WTC11 (cell line): ENCODE measurements at regions of chr11 and their contacts with region 1.

Region 1: DNA sequence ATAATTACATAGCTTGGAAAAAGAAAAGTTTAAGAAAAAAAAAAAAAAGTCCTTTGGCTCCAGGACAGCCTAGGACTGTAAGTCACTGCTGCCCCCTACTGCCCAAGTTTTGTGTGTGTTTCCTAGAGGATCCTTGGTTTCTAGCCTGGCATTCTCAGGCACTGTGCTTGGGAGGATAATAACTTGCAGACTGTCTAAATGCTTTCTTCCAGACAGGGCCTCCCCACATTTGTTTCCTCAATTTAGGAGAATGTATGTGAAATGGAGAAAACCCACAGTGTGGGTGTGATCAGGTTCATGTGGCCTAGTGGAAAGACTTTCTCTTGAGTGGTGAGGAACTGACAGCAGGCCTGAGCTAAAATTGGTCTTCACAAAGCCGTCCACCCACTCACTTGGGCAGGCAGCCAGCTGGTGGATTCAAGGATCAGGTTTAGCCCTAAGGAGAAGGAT is 191.0 kb downstream of the NAV2 start:
- DNase-seq: peak; percentile 85
- ATAC-seq: peak; percentile 83
- H3K4me3 Mint-ChIP-seq: no peak overlapping the region
- H3K27ac Mint-ChIP-seq: no peak overlapping the region
- H3K4me1 Mint-ChIP-seq: peaks cover 26% of the 10 kb centered on the region
- H3K27me3 Mint-ChIP-seq: no peaks in the 10 kb centered on the region
- CTCF ChIP-seq: peak; percentile 75

Region 2: DNA sequence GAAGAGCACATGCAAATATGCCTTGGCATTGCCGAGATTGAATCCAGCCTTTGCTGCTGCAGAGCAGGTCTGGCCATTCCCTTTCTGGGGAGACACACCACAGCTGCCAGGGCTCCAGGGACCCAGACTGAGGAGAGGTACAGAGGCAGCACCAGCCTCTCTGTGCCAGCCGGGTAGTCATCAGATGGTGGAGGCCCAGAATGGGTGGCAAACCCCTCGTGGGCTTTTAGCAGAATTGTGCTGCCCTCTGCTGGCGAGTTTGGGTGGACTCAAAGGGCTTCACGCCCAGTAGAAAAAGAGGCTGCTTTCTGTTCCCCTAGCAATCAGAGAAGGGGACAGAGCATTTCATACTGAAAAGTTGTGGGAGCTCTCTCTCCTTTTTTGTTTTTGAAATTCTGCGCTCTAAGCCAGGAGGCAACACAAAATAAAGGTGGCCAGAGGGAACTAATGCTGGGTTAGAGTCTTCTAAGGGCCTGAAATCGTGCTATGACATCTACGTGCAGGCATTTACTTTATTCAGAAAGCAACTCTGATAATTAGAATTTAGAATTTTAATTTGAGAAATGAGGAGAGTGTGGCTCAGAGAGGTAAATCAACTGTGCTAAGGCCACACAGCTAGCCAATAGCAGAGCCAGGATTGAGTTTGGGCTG is 349.8 kb before region 1 on chr11:
- CTCF ChIA-PET with region 1: interaction called, 14 read pairs
- POLR2A ChIA-PET with region 1: no interaction called
- DNase-seq: peak; percentile 87
- ATAC-seq: peak; percentile 50
- H3K4me3 Mint-ChIP-seq: no peak overlapping the region
- H3K27ac Mint-ChIP-seq: no peak overlapping the region
- H3K4me1 Mint-ChIP-seq: peaks cover 24% of the 10 kb centered on the region
- H3K27me3 Mint-ChIP-seq: no peaks in the 10 kb centered on the region; the same call in 1 of the 2 replicates
- CTCF ChIP-seq: peak; percentile 86

Region 3: GRCh38 chr11:19646921-19647320 is 256.7 kb before region 1 on chr11:
- CTCF ChIA-PET with region 1: no interaction called
- POLR2A ChIA-PET with region 1: no interaction called
- DNase-seq: no peak
- ATAC-seq: no peak
- H3K4me3 Mint-ChIP-seq: no peak overlapping the region
- H3K27ac Mint-ChIP-seq: no peak overlapping the region
- H3K4me1 Mint-ChIP-seq: no peaks in the 10 kb centered on the region
- H3K27me3 Mint-ChIP-seq: no peaks in the 10 kb centered on the region
- CTCF ChIP-seq: no peak

Region 4: GRCh38 chr11:19742588-19743292 is 160.9 kb before region 1 on chr11:
- CTCF ChIA-PET with region 1: interaction called, 26 read pairs
- POLR2A ChIA-PET with region 1: no interaction called
- DNase-seq: peak; percentile 88
- ATAC-seq: peak; percentile 90
- H3K4me3 Mint-ChIP-seq: no peak overlapping the region
- H3K27ac Mint-ChIP-seq: no peak overlapping the region
- H3K4me1 Mint-ChIP-seq: peaks cover 23% of the 10 kb centered on the region
- H3K27me3 Mint-ChIP-seq: no peaks in the 10 kb centered on the region
- CTCF ChIP-seq: peak; percentile 74; the same call in 1 of the 2 replicates

Region 5: DNA sequence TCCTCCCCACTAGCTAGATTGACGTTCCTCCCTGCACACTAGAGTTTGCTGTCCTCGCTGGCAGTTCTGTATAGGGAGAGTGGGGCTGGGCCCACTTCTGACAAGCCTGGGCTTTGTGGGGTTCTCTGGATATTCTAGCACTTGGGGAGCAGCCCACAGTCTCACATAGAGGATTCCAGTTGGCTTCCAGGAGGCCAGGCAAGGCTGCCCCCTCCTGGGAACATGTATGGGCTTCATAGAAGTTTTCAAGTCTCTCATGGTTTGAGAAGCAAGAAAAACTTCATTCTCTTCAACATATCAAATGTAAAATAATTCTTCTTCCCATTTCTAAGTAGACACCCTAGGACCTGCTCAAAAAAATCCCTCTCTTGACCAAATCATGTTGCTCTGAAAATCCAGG is 103.5 kb before region 1 on chr11:
- CTCF ChIA-PET with region 1: interaction called, 13 read pairs
- POLR2A ChIA-PET with region 1: no interaction called
- DNase-seq: peak; percentile 27
- ATAC-seq: no peak; the same call in 1 of the 2 replicates
- H3K4me3 Mint-ChIP-seq: no peak overlapping the region
- H3K27ac Mint-ChIP-seq: 0 out of 2 replicates have a peak overlapping the region, but pooled peaks have one; percentile 15
- H3K4me1 Mint-ChIP-seq: peaks cover 79% of the 10 kb centered on the region
- H3K27me3 Mint-ChIP-seq: no peaks in the 10 kb centered on the region; the same call in 1 of the 2 replicates
- CTCF ChIP-seq: no peak

Region 6: DNA sequence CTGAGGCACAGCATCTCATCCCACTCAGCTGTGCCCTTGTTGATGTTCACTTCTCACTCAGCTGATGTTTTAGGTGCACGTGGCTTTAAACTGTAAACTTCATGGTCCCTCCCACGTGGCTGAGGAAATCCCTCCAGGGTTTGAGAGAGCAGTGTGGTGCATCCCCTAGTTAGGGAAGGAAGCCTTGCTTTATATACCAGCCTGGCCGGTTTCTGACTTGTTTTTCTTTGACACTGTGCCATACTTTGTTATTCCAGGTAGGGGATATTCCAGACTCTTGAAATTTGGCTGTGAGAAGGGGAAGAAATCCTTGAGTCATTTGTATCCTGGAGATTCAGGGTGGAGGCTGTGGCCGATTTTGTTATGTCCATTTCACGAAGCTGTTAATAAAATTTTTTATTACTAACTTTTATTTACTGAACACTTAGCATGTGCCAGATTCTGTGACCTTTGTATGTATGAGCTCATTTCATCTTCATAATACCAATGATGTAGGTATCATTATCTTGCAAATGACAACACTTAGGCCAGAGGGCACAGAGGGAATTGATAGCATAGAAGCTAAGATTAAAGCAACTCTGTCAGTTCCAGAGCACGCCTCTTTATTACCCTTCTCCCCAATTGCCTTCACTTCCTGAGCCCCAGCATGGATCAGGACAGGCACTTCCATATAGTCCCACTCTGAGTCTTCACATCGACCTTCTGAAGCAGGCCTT is 74.4 kb before region 1 on chr11:
- CTCF ChIA-PET with region 1: interaction called, 24 read pairs
- POLR2A ChIA-PET with region 1: no interaction called
- DNase-seq: no peak
- ATAC-seq: peak; percentile 23
- H3K4me3 Mint-ChIP-seq: no peak overlapping the region
- H3K27ac Mint-ChIP-seq: peak overlapping the region; percentile 94
- H3K4me1 Mint-ChIP-seq: peaks cover 69% of the 10 kb centered on the region
- H3K27me3 Mint-ChIP-seq: no peaks in the 10 kb centered on the region
- CTCF ChIP-seq: no peak

Region 7: DNA sequence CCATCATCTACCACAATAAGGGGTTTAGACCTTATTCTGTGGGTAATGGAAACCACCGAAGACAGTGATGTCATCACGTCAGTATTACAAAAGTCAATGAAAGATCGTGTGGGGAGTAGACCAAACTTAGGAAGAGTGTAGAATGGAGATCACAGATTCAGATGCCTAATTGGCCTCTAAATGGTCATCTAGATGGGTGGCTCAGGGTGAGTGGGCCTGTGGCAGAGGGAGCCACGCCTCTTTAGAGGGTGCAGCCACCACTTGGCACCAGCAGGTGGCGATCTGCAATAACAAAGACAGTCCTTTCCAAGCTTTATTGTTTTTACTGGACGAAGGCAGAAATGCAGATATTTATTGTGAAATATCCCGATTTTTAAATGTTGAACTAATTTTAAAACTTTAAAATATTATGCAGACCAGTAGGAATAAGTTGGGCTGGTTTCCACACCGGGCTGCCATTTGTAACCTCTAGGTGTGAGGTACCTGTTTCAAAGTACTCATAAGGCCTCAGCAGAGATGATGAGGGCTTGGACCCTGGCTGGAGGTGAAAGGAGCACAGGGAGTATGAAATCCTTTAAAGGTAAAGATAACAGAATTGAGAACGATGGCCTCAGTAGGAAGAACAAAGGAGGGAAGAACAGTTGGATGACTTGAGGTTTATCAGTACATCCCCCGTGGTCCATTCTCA is 34.7 kb after region 1 on chr11:
- CTCF ChIA-PET with region 1: interaction called, 10 read pairs
- POLR2A ChIA-PET with region 1: no interaction called
- DNase-seq: peak; percentile 76
- ATAC-seq: peak; percentile 72
- H3K4me3 Mint-ChIP-seq: no peak overlapping the region
- H3K27ac Mint-ChIP-seq: no peak overlapping the region
- H3K4me1 Mint-ChIP-seq: peaks cover 11% of the 10 kb centered on the region
- H3K27me3 Mint-ChIP-seq: no peaks in the 10 kb centered on the region
- CTCF ChIP-seq: peak; percentile 89